ENCODE measurements at regions of chr15 and their contacts with region 1.

Region 1: DNA sequence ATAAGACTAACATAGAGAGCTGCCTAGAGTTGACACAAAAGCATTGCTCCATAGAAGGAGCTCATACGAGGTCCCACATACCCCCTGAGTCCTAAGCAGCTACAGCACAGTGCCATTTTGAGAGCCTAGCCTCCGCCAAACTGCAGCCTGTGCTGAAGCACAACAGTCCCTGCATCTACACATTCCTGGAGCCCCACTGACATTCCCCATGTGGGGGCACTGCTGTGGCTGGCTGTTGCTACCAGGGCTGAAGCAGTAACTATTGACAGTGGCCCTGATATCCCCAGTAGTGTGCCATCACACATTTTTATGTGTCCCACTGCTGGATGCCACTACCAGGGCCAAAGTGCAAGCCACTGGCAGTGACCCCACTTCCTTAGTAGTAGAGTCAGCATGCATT is 80.3 kb downstream of the CERS3 start:
- DNase-seq: no peak
- ATAC-seq: no peak
- H3K4me3 ChIP-seq: no peak overlapping the region
- H3K4me3 Mint-ChIP-seq: no peak overlapping the region
- H3K27ac ChIP-seq: no peak overlapping the region
- H3K27ac Mint-ChIP-seq: no peak overlapping the region
- H3K4me1 ChIP-seq: no peaks in the 10 kb centered on the region
- H3K4me1 Mint-ChIP-seq: peaks cover 0 to 7% (median 0%) of the 10 kb centered on the region in 7 donors
- H3K27me3 ChIP-seq: no peaks in the 10 kb centered on the region
- H3K27me3 Mint-ChIP-seq: peaks cover 0 to 2% (median 0%) of the 10 kb centered on the region in 5 donors

Region 2: DNA sequence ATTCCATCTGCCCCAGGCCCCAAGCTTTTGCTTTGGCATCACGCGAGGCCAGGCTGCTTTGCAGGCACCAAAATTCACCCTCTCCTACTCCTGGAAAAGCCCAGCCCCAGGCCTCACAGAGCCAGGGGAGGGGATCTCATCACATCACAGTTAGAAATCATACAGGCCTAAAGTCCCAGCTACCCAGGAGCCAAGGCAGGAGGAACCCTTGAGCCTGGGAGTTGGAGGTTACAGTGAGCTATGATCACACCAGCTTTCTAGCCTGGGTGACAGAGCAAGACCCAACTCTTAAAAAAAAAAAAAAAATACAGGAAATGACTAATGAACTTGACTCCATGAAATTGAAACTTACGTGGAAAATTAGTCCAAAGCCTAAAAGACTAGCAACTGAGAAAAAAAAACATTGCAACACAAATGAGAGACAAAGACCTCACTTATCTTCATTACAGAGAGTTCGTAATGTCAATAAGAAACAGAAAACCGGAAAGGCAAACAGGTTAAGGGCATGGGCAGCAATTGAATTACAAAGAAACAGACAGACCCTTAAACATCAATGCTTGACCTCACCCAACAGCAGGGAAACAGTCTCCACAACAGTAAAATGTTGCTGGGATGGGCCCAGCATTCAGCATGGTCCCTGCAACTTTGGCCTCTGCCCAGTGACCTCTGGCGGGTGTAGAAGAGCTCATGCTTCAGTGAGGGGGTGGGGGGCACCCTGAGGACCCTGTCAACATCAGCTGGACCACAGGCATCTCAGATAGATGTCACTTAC is 622.2 kb after region 1 on chr15:
- CTCF ChIA-PET with region 1: no interaction called
- POLR2A ChIA-PET with region 1: no interaction called
- intact Hi-C with region 1: loop called in 1 of 2 experiments (anchors 10 kb)
- DNase-seq: no peak
- ATAC-seq: no peak
- H3K4me3 ChIP-seq: no peak overlapping the region
- H3K4me3 Mint-ChIP-seq: peak overlapping the region in 1 of 10 donors; percentile 43
- H3K27ac ChIP-seq: no peak overlapping the region
- H3K27ac Mint-ChIP-seq: peak overlapping the region in 2 of 9 donors; percentile 43 to 89
- H3K4me1 ChIP-seq: no peaks in the 10 kb centered on the region
- H3K4me1 Mint-ChIP-seq: peaks cover 0 to 13% (median 0%) of the 10 kb centered on the region in 7 donors
- H3K27me3 ChIP-seq: no peaks in the 10 kb centered on the region
- H3K27me3 Mint-ChIP-seq: peaks cover 0 to 10% (median 0%) of the 10 kb centered on the region in 5 donors